AG04449 (cell line): ENCODE measurements at regions of chr2 and their contacts with region 1.

Region 1: DNA sequence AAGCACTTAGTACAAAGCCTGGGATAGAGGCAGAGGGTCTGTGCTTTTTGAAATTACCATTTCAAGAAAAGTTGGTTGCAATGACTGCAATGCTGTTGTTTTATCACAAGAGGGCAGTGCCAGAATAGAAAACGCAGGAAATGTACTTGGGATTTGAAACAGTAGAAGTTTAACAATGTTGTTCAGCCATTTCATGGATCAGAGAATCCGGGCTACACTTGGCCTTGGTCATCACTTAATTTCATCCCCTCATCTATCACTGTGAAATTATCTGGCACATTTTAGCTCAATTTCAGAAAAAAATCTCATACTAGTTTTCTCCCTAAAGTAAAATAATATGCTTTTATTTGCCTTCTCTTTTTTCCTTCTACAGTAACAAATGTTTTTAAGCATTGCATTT is 70.8 kb downstream of the RAPGEF4 start:
- DNase-seq: no peak
- H3K4me3 ChIP-seq: no peak overlapping the region
- CTCF ChIP-seq: peak; percentile 64

Region 2: GRCh38 chr2:172790404-172790803 is 16.1 kb before region 1 on chr2:
- CTCF ChIA-PET with region 1: interaction called, 48 read pairs
- POLR2A ChIA-PET with region 1: no interaction called
- DNase-seq: no peak
- H3K4me3 ChIP-seq: no peak overlapping the region
- CTCF ChIP-seq: no peak

Region 3: GRCh38 chr2:172821370-172822347 is 15.2 kb after region 1 on chr2:
- CTCF ChIA-PET with region 1: interaction called, 44 read pairs
- POLR2A ChIA-PET with region 1: no interaction called
- DNase-seq: no peak
- H3K4me3 ChIP-seq: no peak overlapping the region
- CTCF ChIP-seq: no peak

Region 4: DNA sequence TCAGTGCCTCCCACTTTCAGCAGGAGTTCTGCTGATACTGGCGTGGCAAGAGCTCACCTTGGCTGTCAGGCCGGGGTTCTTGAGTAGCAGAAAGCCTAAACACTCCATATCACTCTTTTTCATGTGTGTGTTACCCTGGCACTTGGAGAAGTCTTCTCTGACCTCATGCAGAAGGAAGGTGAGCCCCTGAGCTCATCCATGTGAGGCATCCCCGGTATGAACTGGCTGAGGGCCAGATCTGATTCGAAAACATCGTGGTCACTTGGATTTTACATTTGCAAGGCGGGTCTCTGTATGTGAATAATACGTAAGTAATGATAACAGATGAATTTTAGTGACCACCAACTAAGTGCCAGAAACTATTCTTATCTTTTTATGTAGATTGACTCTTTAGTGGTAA is 22.7 kb after region 1 on chr2:
- CTCF ChIA-PET with region 1: interaction called, 44 read pairs
- POLR2A ChIA-PET with region 1: no interaction called
- DNase-seq: peak; percentile 77
- H3K4me3 ChIP-seq: no peak overlapping the region
- CTCF ChIP-seq: no peak

Region 5: GRCh38 chr2:172921532-172922236 is 115.2 kb after region 1 on chr2:
- CTCF ChIA-PET with region 1: interaction called, 254 read pairs
- POLR2A ChIA-PET with region 1: no interaction called
- DNase-seq: no peak
- H3K4me3 ChIP-seq: no peak overlapping the region
- CTCF ChIP-seq: no peak